ENCODE measurements at regions of chr3 and their contacts with region 1.

Region 1: DNA sequence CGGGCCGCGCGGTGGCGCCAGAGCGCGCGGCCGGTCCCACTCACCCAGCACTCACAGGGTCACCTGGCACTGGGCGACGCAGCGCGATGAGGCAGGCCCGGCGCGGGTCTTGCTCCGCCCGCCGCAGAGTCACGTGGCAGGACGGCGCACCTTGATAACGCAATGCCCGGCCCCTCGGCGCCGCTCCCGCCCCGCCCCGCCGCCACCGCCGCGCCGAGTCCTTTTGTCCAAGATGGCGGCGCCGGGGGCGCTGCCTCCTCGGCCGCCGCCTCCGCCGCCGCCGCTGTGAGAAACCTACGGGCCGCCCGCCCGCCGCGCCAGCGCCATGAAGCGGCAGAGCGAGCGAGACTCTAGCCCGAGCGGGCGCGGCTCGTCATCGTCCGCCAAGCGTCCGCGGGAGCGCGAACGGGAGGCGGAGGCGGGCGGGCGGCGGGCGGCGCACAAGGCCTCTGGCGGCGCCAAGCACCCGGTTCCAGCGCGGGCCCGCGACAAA is at the start of gene RBM15B:
- DNase-seq: peak; percentile 63
- H3K4me3 ChIP-seq: peak within 1 kb of the TSS; percentile 75
- CTCF ChIP-seq: peak; percentile 96

Region 2: GRCh38 chr3:51099794-51100535 is 291.2 kb before region 1 on chr3:
- CTCF ChIA-PET with region 1: interaction called, 16 read pairs
- POLR2A ChIA-PET with region 1: no interaction called
- DNase-seq: peak; percentile 4
- H3K4me3 ChIP-seq: no peak overlapping the region
- CTCF ChIP-seq: peak; percentile 72

Region 3: DNA sequence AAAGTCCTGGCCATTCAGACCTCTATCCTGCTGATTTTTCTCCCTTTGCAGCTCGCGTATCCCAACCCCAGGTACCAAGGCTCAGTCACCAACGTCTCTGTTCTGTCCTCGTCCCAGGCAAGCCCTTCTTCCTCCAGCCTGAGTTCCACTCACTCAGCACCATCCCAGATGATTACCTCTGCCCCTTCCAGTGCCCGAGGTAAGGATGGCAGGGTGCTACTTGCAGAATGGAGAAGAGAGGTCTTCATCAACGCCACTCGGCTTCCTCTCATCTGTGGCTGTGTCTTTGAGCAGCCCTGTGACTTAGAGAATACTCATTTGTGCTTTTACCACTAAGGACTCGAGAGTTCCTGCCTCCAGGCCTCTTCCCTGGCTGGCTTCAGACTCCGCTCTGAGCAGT is 28.6 kb before region 1 on chr3:
- CTCF ChIA-PET with region 1: no interaction called
- POLR2A ChIA-PET with region 1: no interaction called
- DNase-seq: no peak
- H3K4me3 ChIP-seq: no peak overlapping the region
- CTCF ChIP-seq: no peak

Region 4: GRCh38 chr3:51379301-51379700 is 11.8 kb before region 1 on chr3:
- CTCF ChIA-PET with region 1: interaction called, 34 read pairs
- POLR2A ChIA-PET with region 1: no interaction called
- DNase-seq: no peak
- H3K4me3 ChIP-seq: no peak overlapping the region
- CTCF ChIP-seq: no peak

Region 5: DNA sequence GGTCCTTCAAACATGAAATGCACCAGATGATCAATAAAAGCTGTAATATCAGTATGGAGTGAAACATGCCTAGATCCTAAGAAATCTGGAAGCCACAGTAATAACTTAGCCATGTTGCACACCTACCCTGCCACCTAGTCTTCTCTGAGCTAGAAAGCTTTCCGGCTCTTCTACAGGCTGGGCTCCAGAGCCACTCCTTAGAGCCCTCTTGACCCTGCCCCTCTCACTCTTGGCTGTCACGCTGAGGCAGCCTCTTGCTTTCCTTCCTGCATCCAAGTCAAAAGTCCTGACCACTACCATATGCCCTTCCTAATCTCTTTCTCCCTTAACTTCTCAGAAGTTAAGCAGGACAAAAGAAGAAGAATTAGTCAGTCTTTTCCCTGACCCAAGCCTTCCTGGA is 17.7 kb after region 1 on chr3:
- CTCF ChIA-PET with region 1: interaction called, 71 read pairs
- POLR2A ChIA-PET with region 1: no interaction called
- DNase-seq: no peak
- H3K4me3 ChIP-seq: no peak overlapping the region
- CTCF ChIP-seq: no peak

Region 6: DNA sequence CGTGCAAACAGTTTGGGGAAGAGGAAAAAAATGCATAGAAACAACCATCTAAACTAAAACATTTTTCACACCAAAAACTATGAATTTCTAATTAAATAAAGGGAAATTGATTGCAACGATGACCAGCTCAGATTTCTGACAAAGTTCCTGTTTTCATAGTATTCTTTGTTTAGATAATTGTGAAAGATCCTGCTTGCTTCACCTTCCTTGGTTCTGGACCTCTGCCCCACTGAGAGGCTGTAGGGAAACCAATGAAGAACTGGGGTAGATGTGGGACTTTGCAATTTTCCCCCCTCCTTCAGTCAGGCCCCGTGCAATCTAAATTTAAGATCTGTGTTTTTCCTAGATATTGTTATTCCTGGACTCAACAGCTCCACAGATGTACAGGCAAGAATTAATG is 266.1 kb after region 1 on chr3:
- CTCF ChIA-PET with region 1: no interaction called
- POLR2A ChIA-PET with region 1: no interaction called
- DNase-seq: no peak
- H3K4me3 ChIP-seq: no peak overlapping the region
- CTCF ChIP-seq: no peak

Region 7: GRCh38 chr3:51682079-51682478 is 291.0 kb after region 1 on chr3:
- CTCF ChIA-PET with region 1: interaction called, 84 read pairs
- POLR2A ChIA-PET with region 1: no interaction called
- DNase-seq: peak; percentile 63
- H3K4me3 ChIP-seq: no peak overlapping the region
- CTCF ChIP-seq: peak; percentile 84